ENCODE measurements at regions of chr11 and their contacts with region 1.

Region 1: GRCh38 chr11:66855574-66856495 is 1.0 kb upstream of the LRFN4 start:
- DNase-seq: peak; percentile 88
- H3K4me3 Mint-ChIP-seq: peak overlapping the region; percentile 94
- H3K27ac Mint-ChIP-seq: peak overlapping the region; percentile 97
- H3K4me1 Mint-ChIP-seq: peaks cover 14% of the 10 kb centered on the region
- H3K27me3 Mint-ChIP-seq: no peaks in the 10 kb centered on the region

Region 2: GRCh38 chr11:66868726-66869566 is 13.1 kb after region 1 on chr11:
- intact Hi-C with region 1: loop called (anchors 1 kb)
- DNase-seq: peak; percentile 69
- H3K4me3 Mint-ChIP-seq: no peak overlapping the region
- H3K27ac Mint-ChIP-seq: no peak overlapping the region
- H3K4me1 Mint-ChIP-seq: peaks cover 7% of the 10 kb centered on the region
- H3K27me3 Mint-ChIP-seq: peaks cover 1% of the 10 kb centered on the region

Region 3: DNA sequence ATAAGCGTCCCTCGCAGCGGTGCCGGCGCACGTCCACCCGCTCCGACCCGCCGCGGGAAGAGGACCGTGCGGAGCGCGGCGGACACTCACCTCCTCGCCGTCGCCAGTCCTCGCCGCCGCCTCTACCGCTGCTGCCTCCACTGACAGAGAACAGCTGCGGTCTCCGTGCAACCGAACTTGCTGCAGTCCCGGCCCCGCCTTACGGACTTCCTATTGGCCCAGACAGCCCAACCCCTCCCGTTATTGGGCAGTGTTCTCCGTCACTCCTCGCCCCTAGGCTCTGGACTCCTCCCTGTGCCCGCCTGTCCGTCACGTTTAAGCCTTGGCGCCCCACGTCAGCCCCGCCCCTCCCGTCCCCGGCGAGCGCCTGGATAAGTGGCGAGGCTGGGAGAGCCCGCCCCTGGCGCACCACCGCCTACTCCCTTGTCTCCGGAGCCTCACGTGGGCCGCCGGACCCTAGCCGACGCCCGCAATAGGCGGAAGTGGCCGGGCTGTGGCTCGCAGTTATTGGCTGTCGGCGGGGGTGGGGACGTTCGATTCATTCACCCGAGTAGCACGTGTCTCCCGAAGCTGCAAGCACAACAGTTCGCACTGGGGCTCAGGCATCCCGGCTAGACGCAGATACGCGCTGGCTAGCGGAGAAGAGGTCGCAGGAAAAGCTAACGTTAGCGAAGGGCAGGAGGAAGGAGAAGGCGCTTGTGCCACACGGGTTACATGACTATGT is 102.6 kb after region 1 on chr11 and contains the start of gene PC:
- intact Hi-C with region 1: loop called (anchors 1 kb)
- DNase-seq: peak; percentile 97
- H3K4me3 Mint-ChIP-seq: peak within 1 kb of the TSS; percentile 83
- H3K27ac Mint-ChIP-seq: peak within 1 kb of the TSS; percentile 90
- H3K4me1 Mint-ChIP-seq: peaks cover 29% of the 10 kb centered on the region
- H3K27me3 Mint-ChIP-seq: peaks cover 16% of the 10 kb centered on the region
- total RNA-seq, gene PC: 11.2 and 15.9 TPM in 2 replicates